Heart right ventricle (tissue), 16 donors: ENCODE measurements at regions of chr7 and their contacts with region 1.

Region 1: DNA sequence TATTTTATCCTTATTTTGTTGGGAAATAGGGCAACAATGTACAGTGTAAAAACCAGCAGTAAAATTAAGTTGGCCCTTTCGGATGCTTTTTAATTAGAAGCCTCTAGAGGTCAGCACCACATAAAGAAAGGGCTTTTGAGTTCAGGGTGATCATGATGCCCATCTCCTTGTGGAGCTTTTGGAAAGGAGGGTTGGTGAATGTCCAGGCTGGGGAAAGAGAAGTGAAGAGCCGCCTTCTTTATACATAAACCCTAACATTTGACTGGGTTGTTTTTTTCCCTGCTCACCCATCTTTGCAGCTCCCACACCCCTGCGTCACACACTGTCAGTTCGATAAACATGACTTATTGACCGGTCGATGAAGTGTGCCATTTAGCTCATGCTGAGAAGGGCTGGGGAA is 29.8 kb downstream of the MTURN start:
- DNase-seq: no peak
- ATAC-seq: peak; percentile 11 to 73 (median 64)
- H3K4me3 ChIP-seq: no peak overlapping the region
- H3K27ac ChIP-seq: peak overlapping the region in 3 of 10 donors; percentile 33 to 76 (median 57)
- H3K4me1 ChIP-seq: peaks cover 0 to 82% (median 30%) of the 10 kb centered on the region in 9 donors
- H3K27me3 ChIP-seq: no peaks in the 10 kb centered on the region
- CTCF ChIP-seq: peak; percentile 33 to 76 (median 70)

Region 2: GRCh38 chr7:30268586-30268985 is 104.0 kb after region 1 on chr7:
- intact Hi-C with region 1: loop called in 4 of 10 experiments (anchors 10 kb)
- DNase-seq: no peak
- ATAC-seq: no peak
- H3K4me3 ChIP-seq: no peak overlapping the region
- H3K27ac ChIP-seq: no peak overlapping the region
- H3K4me1 ChIP-seq: peaks cover 0 to 11% (median 0%) of the 10 kb centered on the region in 9 donors
- H3K27me3 ChIP-seq: no peaks in the 10 kb centered on the region
- CTCF ChIP-seq: no peak

Region 3: GRCh38 chr7:30276203-30276900 is 111.8 kb after region 1 on chr7:
- intact Hi-C with region 1: loop called in 7 of 10 experiments (anchors 5 to 10 kb)
- DNase-seq: peak in 1 of 2 donors; percentile 59
- ATAC-seq: peak; percentile 64 to 85 (median 76)
- H3K4me3 ChIP-seq: no peak overlapping the region
- H3K27ac ChIP-seq: no peak overlapping the region
- H3K4me1 ChIP-seq: peaks cover 0 to 22% (median 0%) of the 10 kb centered on the region in 9 donors
- H3K27me3 ChIP-seq: no peaks in the 10 kb centered on the region
- CTCF ChIP-seq: peak; percentile 40 to 78 (median 66)

Region 4: DNA sequence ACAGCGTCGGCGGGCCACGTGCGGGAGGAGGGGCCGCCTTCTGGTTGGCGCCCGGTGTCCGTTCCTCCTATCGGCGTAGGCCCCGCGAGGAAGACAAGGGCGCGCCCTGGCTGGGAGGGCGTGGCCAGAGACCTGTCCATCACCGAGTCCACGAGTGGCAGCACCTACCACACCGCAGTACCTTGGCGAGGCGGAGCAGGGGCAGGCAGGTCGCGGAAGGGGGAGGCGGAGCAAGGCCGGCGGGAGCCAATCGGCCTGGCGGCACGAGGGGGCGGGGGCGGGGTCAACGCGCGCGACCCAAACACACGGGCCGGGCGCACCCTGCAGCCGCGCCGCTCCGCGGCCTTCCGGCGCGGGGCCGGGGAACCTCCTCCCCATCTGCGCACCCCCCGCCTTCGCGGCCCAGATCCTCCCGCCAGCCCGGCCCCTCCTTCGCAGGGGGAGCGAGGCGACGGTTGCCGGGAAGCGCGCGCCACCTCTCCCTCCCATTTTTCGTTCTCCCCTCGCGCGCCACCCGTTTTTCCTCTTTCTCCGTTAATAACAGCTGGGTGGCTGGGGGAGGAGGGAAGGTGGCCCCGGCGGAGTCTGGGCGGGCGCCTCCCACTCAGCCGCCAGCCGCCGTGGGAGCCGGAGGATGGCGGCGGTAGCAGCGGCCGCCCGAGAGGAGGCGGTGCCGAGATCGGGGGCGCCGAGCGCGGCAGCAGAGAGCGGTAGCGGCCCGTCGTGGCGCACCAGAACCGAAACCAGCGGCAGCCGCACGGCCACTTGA is 119.9 kb after region 1 on chr7 and contains the start of gene ZNRF2:
- intact Hi-C with region 1: loop called in 7 of 10 experiments (anchors 5 to 10 kb)
- DNase-seq: peak; percentile 98
- ATAC-seq: peak; percentile 92 to 99 (median 98)
- H3K4me3 ChIP-seq: peak within 1 kb of the TSS; percentile 45 to 95 (median 81)
- H3K27ac ChIP-seq: peak within 1 kb of the TSS; percentile 83 to 99 (median 98)
- H3K4me1 ChIP-seq: peaks cover 4 to 42% (median 29%) of the 10 kb centered on the region in 9 donors
- H3K27me3 ChIP-seq: no peaks in the 10 kb centered on the region
- CTCF ChIP-seq: peak; percentile 11 to 83 (median 53)
- total RNA-seq, gene ZNRF2: 5.3 to 13.8 (median 8.8) TPM

Region 5: GRCh38 chr7:30406664-30407425 is 242.3 kb after region 1 on chr7:
- intact Hi-C with region 1: loop called (anchors 2 to 10 kb)
- DNase-seq: no peak
- ATAC-seq: peak in 7 of 8 donors; percentile 54 to 91 (median 72)
- H3K4me3 ChIP-seq: no peak overlapping the region
- H3K27ac ChIP-seq: peak overlapping the region in 4 of 10 donors; percentile 9 to 53 (median 36)
- H3K4me1 ChIP-seq: peaks cover 0 to 14% (median 0%) of the 10 kb centered on the region in 9 donors
- H3K27me3 ChIP-seq: no peaks in the 10 kb centered on the region
- CTCF ChIP-seq: no peak

Region 6: DNA sequence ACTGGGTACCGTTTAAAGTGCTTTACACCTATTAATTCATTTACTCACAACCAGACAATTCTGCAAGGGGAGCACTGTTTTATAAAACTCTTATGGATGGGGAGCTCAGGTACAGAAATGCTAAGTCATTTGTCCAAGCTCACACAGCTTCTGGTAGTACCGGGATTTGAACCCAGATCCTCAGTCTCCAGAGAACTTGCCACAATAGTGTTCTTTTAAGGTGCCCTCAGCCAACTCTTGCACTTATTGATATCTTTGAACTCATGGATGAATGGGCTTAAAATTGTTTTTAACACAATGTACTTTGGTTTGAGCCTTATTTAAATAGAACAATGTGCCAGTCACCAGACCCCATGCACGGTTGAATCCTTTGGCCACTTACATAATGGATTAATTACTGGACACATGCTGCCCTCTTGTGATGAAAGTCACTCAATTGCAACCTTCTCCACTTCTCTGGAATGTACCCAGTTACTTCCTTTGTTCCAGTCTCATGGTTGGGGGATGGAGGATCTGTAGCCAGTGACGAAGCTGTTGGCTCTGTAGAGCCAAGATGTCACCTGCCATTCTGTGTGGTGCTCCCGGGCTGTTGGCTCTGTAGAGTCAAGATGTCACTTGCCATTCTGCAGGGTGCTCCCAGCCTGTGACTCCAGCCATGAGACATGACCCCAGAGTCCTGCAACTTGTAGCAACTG is 248.4 kb after region 1 on chr7:
- intact Hi-C with region 1: loop called (anchors 2 to 10 kb)
- DNase-seq: peak in 1 of 2 donors; percentile 49
- ATAC-seq: peak; percentile 85 to 95 (median 92)
- H3K4me3 ChIP-seq: no peak overlapping the region
- H3K27ac ChIP-seq: no peak overlapping the region
- H3K4me1 ChIP-seq: peaks cover 0 to 26% (median 0%) of the 10 kb centered on the region in 9 donors
- H3K27me3 ChIP-seq: no peaks in the 10 kb centered on the region
- CTCF ChIP-seq: peak; percentile 27 to 78 (median 68)

Region 7: DNA sequence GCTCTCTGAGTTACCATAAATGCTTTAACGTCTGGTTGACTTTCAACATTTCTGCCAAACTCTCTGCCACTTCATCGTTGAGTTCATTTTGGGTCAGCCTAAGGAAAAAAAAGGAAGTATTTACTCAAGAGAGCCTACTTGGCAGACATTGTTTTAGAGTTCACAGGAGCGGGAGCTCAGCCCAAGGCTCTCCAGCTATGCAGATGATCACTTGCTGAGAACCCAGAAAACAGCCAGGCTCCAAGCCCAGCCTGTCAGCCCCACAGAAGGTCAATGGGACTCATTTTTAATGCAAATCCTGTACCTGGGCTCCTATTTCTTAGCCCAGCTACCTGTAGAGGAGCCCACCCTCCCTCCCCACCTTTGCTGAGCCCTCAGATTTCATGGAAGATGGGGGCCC is 268.5 kb after region 1 on chr7:
- intact Hi-C with region 1: loop called in 1 of 10 experiments (anchors 5 kb)
- DNase-seq: peak; percentile 38 to 52
- ATAC-seq: peak; percentile 70 to 84 (median 78)
- H3K4me3 ChIP-seq: no peak overlapping the region
- H3K27ac ChIP-seq: peak overlapping the region in 6 of 10 donors; percentile 0 to 81 (median 54)
- H3K4me1 ChIP-seq: peaks cover 9 to 87% (median 34%) of the 10 kb centered on the region in 9 donors
- H3K27me3 ChIP-seq: no peaks in the 10 kb centered on the region
- CTCF ChIP-seq: no peak